ACHN (cell line): ENCODE measurements at regions of chr10 and their contacts with region 1.

Region 1: GRCh38 chr10:79487296-79488194 is 24.8 kb upstream of the EIF5AL1 start:
- DNase-seq: peak; percentile 84

Region 2: DNA sequence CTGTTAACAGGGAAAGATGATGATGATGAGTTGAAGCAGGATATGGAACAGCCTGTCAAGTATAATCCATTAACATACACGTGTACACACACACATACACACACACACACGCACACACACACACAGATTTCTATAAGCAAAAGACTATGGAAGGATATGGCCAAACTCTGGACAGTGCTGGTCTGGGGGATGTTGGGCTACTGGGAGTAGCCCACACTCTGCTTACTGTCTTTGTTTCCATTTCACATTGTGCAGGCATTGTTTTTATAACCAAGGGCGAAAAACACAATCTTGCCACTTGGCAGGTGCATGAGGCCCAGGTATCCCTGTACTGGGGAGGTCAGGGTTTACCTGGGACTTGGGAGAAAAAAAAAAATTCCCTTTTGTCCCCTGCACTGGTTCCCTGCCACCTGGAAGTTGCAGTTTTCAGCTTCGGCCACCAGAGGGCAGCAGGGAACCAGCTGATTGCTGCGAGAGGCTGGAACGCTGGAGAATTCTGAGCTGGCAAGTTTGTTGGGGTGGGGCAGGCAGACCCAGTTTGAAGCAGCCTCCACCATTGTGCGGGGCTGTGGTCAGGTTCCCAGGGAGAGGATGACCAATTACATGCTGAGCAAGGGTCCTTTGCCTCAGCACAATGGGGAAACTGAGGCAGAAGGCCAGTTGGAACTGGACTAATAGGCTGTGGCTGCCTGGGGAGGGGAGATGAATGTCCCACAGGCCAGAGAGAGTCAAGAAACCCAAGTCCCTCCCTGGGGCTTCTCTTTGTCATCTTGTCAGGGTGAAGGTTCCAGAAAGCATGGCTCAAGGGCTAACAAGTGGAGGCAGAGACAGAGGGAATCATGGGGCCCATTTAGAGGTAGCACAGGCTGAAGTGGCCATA is 113.0 kb before region 1 on chr10:
- in situ Hi-C with region 1: loop called (anchors 25 kb)
- DNase-seq: peak; percentile 71

Region 3: DNA sequence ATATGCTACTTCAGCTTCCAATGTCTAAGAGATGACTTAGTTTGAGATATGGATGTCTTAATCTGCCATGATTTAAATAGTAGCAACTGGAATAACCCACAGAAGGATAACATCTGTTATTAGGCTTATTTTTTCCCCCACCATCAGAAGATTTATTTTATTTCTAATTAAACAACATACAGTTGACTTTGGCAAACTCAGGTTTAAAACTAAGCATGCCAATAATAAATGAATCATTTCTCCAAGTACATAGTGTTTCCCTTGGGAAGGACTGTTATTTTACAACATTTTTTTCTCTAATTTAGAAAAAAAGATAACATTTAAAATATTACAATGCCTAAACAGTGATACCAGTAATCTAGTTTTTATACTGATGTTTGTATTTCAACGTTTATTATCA is 402.9 kb after region 1 on chr10:
- in situ Hi-C with region 1: no loop called
- DNase-seq: no peak